HepG2 (cell line): ENCODE measurements at regions of chr20 and their contacts with region 1.

Region 1: GRCh38 chr20:46607849-46608497 is 43.3 kb downstream of the SLC13A3 start:
- DNase-seq: peak; percentile 68
- ATAC-seq: peak; percentile 54
- H3K4me3 ChIP-seq: peak overlapping the region in 1 of 3 experiments; percentile 32; a peak in 2 of 6 replicates
- H3K27ac ChIP-seq: peak overlapping the region; percentile 80
- H3K4me1 ChIP-seq: peaks cover 65% of the 10 kb centered on the region
- H3K27me3 ChIP-seq: no peaks in the 10 kb centered on the region
- CTCF ChIP-seq: peak; percentile 62
- EP300 ChIP-seq: peak in 1 of 2 experiments; percentile 25; a peak in 1 of 4 replicates
- POLR2A ChIP-seq: no peak
- RAD21 ChIP-seq: no peak

Region 2: GRCh38 chr20:46562373-46563169 is 45.4 kb before region 1 on chr20:
- CTCF ChIA-PET with region 1: no interaction called
- POLR2A ChIA-PET with region 1: interaction called, 15 read pairs
- in situ Hi-C with region 1: no loop called
- intact Hi-C with region 1: loop called (anchors 2 kb)
- DNase-seq: peak; percentile 87
- ATAC-seq: peak; percentile 74
- H3K4me3 ChIP-seq: peak overlapping the region; percentile 24 to 58 (median 29); a peak in 5 of 6 replicates
- H3K27ac ChIP-seq: peak overlapping the region; percentile 55
- H3K4me1 ChIP-seq: peaks cover 72% of the 10 kb centered on the region
- H3K27me3 ChIP-seq: no peaks in the 10 kb centered on the region
- CTCF ChIP-seq: peak; percentile 93
- EP300 ChIP-seq: peak; percentile 41 to 46; a peak in 2 of 4 replicates
- POLR2A ChIP-seq: no peak; a peak in 1 of 4 replicates
- RAD21 ChIP-seq: peak; percentile 65; the same call in 1 of the 2 replicates

Region 3: GRCh38 chr20:46583411-46584214 is 24.4 kb before region 1 on chr20:
- CTCF ChIA-PET with region 1: no interaction called
- POLR2A ChIA-PET with region 1: no interaction called
- in situ Hi-C with region 1: no loop called
- intact Hi-C with region 1: loop called (anchors 2 kb)
- DNase-seq: no peak
- ATAC-seq: no peak
- H3K4me3 ChIP-seq: no peak overlapping the region
- H3K27ac ChIP-seq: peak overlapping the region; percentile 16
- H3K4me1 ChIP-seq: peaks cover 39% of the 10 kb centered on the region
- H3K27me3 ChIP-seq: no peaks in the 10 kb centered on the region
- CTCF ChIP-seq: no peak
- EP300 ChIP-seq: no peak
- POLR2A ChIP-seq: no peak
- RAD21 ChIP-seq: no peak

Region 4: GRCh38 chr20:46638134-46638897 is 30.3 kb after region 1 on chr20:
- CTCF ChIA-PET with region 1: no interaction called
- POLR2A ChIA-PET with region 1: interaction called, 22 read pairs
- in situ Hi-C with region 1: no loop called
- intact Hi-C with region 1: no loop called
- DNase-seq: peak; percentile 89
- ATAC-seq: peak; percentile 86
- H3K4me3 ChIP-seq: peak overlapping the region in 1 of 3 experiments; percentile 47; a peak in 1 of 6 replicates
- H3K27ac ChIP-seq: peak overlapping the region; percentile 75
- H3K4me1 ChIP-seq: peaks cover 100% of the 10 kb centered on the region
- H3K27me3 ChIP-seq: no peaks in the 10 kb centered on the region
- CTCF ChIP-seq: peak; percentile 23; the same call in 1 of the 2 replicates
- EP300 ChIP-seq: peak; percentile 45 to 65; a peak in 2 of 4 replicates
- POLR2A ChIP-seq: peak in 1 of 2 experiments; percentile 42; a peak in 1 of 4 replicates
- RAD21 ChIP-seq: peak; percentile 57

Region 5: DNA sequence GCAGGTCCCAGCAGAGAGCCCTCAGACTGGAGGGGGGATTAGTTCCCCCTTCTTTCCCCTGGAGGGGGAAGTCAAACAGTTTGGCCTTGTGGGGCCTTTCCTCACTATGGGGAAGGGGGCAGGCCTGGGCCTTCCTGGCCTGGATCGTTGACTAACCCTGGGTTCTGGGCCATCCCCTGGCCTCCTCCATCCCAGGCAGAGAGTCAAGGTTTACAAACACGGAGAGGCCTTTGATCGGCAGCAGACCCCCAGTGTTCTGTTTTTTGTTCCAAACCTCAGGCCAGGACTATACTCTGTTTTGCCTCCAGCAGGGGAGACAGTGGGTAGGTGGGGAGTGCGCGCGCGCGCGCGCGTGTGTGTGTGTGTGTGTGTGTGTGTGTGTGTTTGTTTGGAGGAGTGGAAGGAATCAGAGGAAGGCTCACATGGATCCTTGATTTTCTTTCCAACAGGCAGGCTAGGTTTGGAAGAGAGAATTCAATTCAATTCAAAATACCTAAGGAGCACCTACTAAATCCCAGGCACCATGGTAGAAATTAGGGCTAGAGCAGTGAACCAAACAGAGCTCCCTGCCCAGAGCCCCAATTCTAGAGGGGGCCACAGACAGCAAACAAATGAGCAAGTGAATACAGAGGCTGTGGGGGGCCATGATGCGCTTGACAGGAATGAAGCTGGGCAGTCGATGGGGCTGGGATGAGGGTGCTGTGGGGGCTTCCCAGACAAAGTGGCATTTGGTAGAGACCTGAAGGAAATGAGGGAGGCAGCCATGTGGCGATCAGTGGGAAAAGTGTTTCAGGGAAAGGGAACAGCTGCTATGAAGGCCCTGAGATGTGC is 66.5 kb after region 1 on chr20:
- CTCF ChIA-PET with region 1: no interaction called
- POLR2A ChIA-PET with region 1: interaction called, 19 read pairs
- in situ Hi-C with region 1: no loop called
- intact Hi-C with region 1: no loop called
- DNase-seq: peak; percentile 100
- ATAC-seq: peak; percentile 89
- H3K4me3 ChIP-seq: peak overlapping the region in 1 of 3 experiments; percentile 53; a peak in 2 of 6 replicates
- H3K27ac ChIP-seq: peak overlapping the region; percentile 84
- H3K4me1 ChIP-seq: peaks cover 96% of the 10 kb centered on the region
- H3K27me3 ChIP-seq: no peaks in the 10 kb centered on the region
- CTCF ChIP-seq: peak; percentile 53
- EP300 ChIP-seq: peak; percentile 55 to 95; a peak in 3 of 4 replicates
- POLR2A ChIP-seq: no peak
- RAD21 ChIP-seq: peak; percentile 77